ENCODE measurements at regions of chr20 and their contacts with region 1.

Region 1: GRCh38 chr20:8616792-8617191 is 452.1 kb upstream of the PLCB4 start:
- DNase-seq: no peak
- ATAC-seq: peak in 7 of 8 donors; percentile 59 to 84 (median 79)
- H3K4me3 ChIP-seq: no peak overlapping the region
- H3K27ac ChIP-seq: peak overlapping the region in 6 of 10 donors; percentile 17 to 44 (median 24)
- H3K4me1 ChIP-seq: peaks cover 0 to 13% (median 0%) of the 10 kb centered on the region in 9 donors
- H3K27me3 ChIP-seq: no peaks in the 10 kb centered on the region
- CTCF ChIP-seq: no peak

Region 2: DNA sequence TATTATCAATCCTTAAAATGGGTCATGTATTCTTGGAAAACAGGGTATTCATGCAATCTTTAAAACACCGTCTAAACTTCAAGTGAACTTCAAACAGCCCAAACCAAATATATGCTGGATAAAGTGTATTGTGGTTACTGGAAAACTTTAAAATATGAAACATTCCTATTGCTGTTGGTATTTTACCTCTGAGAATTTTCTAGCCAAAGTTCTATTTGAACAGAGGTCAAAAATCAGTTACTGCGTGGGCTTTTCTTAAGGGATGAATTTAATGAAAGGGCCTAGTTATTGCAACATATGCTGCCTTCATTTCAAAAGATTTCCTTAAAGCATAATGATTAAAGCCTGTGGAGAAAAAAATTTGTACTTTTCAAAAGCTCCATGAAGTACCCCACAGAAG is 48.7 kb before region 1 on chr20:
- intact Hi-C with region 1: loop called in 1 of 10 experiments (anchors 10 kb)
- DNase-seq: no peak
- ATAC-seq: peak in 1 of 8 donors; percentile 53
- H3K4me3 ChIP-seq: no peak overlapping the region
- H3K27ac ChIP-seq: no peak overlapping the region
- H3K4me1 ChIP-seq: peaks cover 0 to 6% (median 0%) of the 10 kb centered on the region in 9 donors
- H3K27me3 ChIP-seq: no peaks in the 10 kb centered on the region
- CTCF ChIP-seq: no peak

Measured in heart right ventricle (tissue), 16 donors.